G401 (cell line): ENCODE measurements at regions of chr5 and their contacts with region 1.

Region 1: GRCh38 chr5:171724468-171725204 is 61.0 kb upstream of the SMIM23 start:
- DNase-seq: no peak

Region 2: GRCh38 chr5:171644536-171644935 is 80.1 kb before region 1 on chr5:
- in situ Hi-C with region 1: loop called (anchors 5 kb)
- DNase-seq: no peak

Region 3: DNA sequence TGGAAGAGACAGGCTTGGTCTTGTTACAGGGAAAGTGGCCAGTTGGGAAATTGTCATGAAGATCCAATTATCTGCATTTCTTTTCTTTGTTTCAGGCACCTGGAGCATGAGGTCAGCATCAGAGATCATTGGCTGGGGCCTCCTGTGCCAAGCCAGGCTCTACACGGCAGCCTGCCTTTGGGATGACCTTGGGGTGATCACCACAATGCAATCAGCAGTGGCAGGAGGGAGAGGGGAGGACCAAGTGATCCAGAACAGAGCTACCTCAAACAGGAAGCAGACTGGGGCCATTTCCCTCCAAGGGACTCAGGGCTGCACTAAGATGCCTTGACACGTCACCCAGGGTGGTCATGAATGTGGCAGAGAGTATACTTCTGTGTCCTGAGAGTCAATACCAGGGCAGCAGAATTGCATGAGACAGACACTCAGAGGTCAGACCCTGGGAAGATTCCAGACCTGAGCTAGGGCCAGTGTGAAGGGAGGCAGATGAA is 69.9 kb after region 1 on chr5:
- in situ Hi-C with region 1: loop called (anchors 5 kb)
- DNase-seq: no peak